ENCODE measurements at regions of chr7 and their contacts with region 1.

Region 1: GRCh38 chr7:44797329-44798251 is 1.1 kb downstream of the PPIA start:
- DNase-seq: peak in 1 of 2 donors; percentile 97
- H3K4me3 ChIP-seq: peak overlapping the region; percentile 77 to 85
- H3K27ac ChIP-seq: peak overlapping the region; percentile 98
- H3K4me1 ChIP-seq: peaks cover 33% of the 10 kb centered on the region
- H3K27me3 ChIP-seq: no peaks in the 10 kb centered on the region
- CTCF ChIP-seq: peak in 2 of 3 experiments; percentile 12 to 15
- POLR2A ChIP-seq: peak in 1 of 2 donors; percentile 35

Region 2: DNA sequence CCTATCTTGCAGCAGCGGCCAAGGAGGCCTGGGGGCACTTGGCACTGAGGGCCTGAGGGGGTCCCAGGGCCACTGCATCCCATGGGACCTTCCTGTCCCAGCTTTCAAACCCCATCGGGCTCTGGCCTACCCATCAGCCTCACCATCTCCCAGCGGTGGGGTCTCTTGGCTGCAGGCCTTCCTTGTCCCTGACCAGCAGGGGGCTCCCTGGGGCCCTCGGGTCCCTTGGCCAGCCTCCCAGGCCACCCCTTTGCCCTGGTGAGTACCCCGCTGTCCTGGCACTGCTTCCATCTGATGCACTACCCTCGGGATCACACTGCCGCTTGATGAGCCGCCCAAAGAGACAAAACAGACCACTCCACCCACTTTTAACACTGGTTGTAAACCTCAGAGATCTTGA is 553.3 kb before region 1 on chr7:
- intact Hi-C with region 1: no loop called
- DNase-seq: no peak
- H3K4me3 ChIP-seq: no peak overlapping the region
- H3K27ac ChIP-seq: no peak overlapping the region
- H3K4me1 ChIP-seq: peaks cover 4% of the 10 kb centered on the region
- H3K27me3 ChIP-seq: no peaks in the 10 kb centered on the region
- CTCF ChIP-seq: no peak
- POLR2A ChIP-seq: no peak

Region 3: DNA sequence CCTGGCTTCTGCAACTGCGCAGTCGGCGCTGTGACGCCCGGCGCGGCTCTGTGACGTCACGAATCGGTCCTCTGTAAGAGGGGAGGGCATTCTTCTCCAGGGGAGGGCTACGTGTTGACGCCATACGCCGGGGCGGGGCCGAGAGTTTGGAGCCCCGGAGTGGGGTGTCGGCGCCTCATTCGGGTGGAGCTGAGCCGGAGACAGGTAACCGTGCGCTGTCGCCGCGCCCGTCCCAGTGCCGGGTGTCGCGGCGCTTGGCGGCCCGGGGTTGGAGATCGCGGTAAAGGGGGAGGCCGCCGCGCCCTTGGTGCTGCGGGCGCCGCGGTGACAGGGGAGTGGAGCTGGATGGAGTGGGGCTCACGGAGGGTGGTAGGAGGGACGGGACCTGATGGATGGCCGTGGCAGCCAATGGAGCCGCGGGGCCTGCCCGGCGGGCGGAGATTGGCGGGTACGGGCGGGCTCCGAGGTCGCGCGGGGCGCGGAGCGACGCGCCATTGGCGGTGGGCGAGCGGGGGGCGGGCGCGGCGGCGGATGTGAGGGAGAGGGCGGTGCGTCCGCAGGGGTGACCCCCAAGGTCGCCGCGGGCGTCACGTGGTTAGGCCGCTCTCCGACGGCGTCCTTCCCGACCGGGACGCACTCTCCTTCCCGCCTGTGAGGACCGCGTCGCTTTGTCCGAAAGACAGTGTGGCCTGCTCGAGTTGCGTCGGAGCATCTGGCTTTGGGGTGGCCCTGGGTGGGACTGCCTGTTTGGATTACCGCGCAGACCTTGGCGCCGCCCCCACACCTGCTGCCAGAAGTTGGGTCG is 190.9 kb before region 1 on chr7 and contains the start of gene OGDH:
- intact Hi-C with region 1: loop called (anchors 2 kb)
- DNase-seq: peak; percentile 99
- H3K4me3 ChIP-seq: peak within 1 kb of the TSS; percentile 81 to 92
- H3K27ac ChIP-seq: peak within 1 kb of the TSS; percentile 99
- H3K4me1 ChIP-seq: peaks cover 29% of the 10 kb centered on the region
- H3K27me3 ChIP-seq: no peaks in the 10 kb centered on the region
- CTCF ChIP-seq: no peak
- POLR2A ChIP-seq: peak in 1 of 2 donors; percentile 94
- total RNA-seq, gene OGDH: 80.0 TPM

Region 4: GRCh38 chr7:44824894-44825526 is 27.4 kb after region 1 on chr7:
- intact Hi-C with region 1: no loop called
- DNase-seq: no peak
- H3K4me3 ChIP-seq: no peak overlapping the region
- H3K27ac ChIP-seq: no peak overlapping the region
- H3K4me1 ChIP-seq: no peaks in the 10 kb centered on the region
- H3K27me3 ChIP-seq: no peaks in the 10 kb centered on the region
- CTCF ChIP-seq: no peak
- POLR2A ChIP-seq: no peak